ENCODE measurements at regions of chr19 and their contacts with region 1.

Region 1: GRCh38 chr19:23758187-23759074 is at the start of gene ZNF681:
- DNase-seq: peak; percentile 66
- ATAC-seq: peak; percentile 86
- H3K4me3 Mint-ChIP-seq: peak within 1 kb of the TSS; percentile 98
- H3K27ac Mint-ChIP-seq: peak within 1 kb of the TSS; percentile 93
- H3K4me1 Mint-ChIP-seq: peaks cover 19% of the 10 kb centered on the region
- H3K27me3 Mint-ChIP-seq: no peaks in the 10 kb centered on the region
- CTCF ChIP-seq: no peak
- total RNA-seq, gene ZNF681: 5.5 and 8.3 TPM in 2 replicates

Region 2: GRCh38 chr19:23116802-23117571 is 641.4 kb before region 1 on chr19 and contains the start of gene ZNF730:
- CTCF ChIA-PET with region 1: no interaction called
- POLR2A ChIA-PET with region 1: no interaction called
- intact Hi-C with region 1: loop called (anchors 2 kb)
- DNase-seq: peak; percentile 55
- ATAC-seq: peak; percentile 99
- H3K4me3 Mint-ChIP-seq: peak within 1 kb of the TSS; percentile 91
- H3K27ac Mint-ChIP-seq: peak within 1 kb of the TSS; percentile 24
- H3K4me1 Mint-ChIP-seq: peaks cover 11% of the 10 kb centered on the region
- H3K27me3 Mint-ChIP-seq: no peaks in the 10 kb centered on the region
- CTCF ChIP-seq: no peak
- total RNA-seq, gene ZNF730: 1.3 and 1.5 TPM in 2 replicates

Region 3: DNA sequence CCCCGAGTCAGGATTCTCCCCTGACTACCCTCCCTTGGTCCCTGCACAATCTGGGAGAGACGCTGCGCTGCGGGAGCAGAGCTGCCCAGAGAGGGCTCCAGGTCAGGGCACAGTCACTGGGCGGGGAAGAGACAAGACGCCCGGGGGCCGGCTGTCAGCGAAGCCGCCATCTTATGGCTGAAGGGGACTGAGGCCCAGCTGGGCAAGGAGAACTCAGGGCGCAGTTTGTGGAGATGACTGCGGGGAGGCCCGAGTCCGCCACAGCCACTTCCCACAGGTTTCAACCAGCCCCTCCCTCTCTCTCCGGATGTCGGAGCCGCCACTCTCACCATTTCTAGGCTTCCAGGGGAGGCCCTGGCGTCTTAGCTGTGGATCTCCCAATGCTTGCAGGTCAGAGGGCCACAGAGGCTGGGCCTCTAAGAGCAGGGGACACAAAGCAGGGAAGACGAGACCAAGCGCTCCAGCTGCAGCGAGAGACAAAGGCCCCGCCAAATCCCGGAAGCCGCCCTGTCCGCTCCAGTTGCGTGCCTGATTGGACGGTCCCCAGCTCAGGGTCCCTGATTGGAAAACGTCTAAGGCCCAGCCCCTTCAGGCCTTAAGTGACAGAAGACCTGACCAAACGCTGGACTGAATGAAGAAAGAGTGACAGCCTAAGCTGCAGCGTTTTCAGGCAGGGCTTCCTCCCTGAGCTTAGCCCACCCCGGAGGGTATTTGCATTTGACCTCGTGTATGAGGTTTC is 508.4 kb before region 1 on chr19 and contains the start of gene ZNF724:
- CTCF ChIA-PET with region 1: no interaction called
- POLR2A ChIA-PET with region 1: no interaction called
- intact Hi-C with region 1: loop called (anchors 2 kb)
- DNase-seq: peak; percentile 77
- ATAC-seq: peak; percentile 100
- H3K4me3 Mint-ChIP-seq: peak within 1 kb of the TSS; percentile 98
- H3K27ac Mint-ChIP-seq: peak within 1 kb of the TSS; percentile 88
- H3K4me1 Mint-ChIP-seq: peaks cover 10% of the 10 kb centered on the region
- H3K27me3 Mint-ChIP-seq: no peaks in the 10 kb centered on the region
- CTCF ChIP-seq: no peak
- total RNA-seq, gene ZNF724: 4.5 and 8.0 TPM in 2 replicates

Region 4: GRCh38 chr19:23832717-23833327 is 74.4 kb after region 1 on chr19:
- CTCF ChIA-PET with region 1: no interaction called
- POLR2A ChIA-PET with region 1: no interaction called
- intact Hi-C with region 1: no loop called
- DNase-seq: no peak
- ATAC-seq: no peak
- H3K4me3 Mint-ChIP-seq: no peak overlapping the region
- H3K27ac Mint-ChIP-seq: no peak overlapping the region
- H3K4me1 Mint-ChIP-seq: no peaks in the 10 kb centered on the region
- H3K27me3 Mint-ChIP-seq: no peaks in the 10 kb centered on the region
- CTCF ChIP-seq: no peak

Region 5: GRCh38 chr19:23914402-23915301 is 156.2 kb after region 1 on chr19 and contains the start of gene ZNF726:
- CTCF ChIA-PET with region 1: no interaction called
- POLR2A ChIA-PET with region 1: no interaction called
- intact Hi-C with region 1: loop called (anchors 1 kb)
- DNase-seq: peak; percentile 67
- ATAC-seq: peak; percentile 97
- H3K4me3 Mint-ChIP-seq: peak within 1 kb of the TSS; percentile 96
- H3K27ac Mint-ChIP-seq: peak within 1 kb of the TSS; percentile 83
- H3K4me1 Mint-ChIP-seq: peaks cover 10% of the 10 kb centered on the region
- H3K27me3 Mint-ChIP-seq: no peaks in the 10 kb centered on the region
- CTCF ChIP-seq: no peak
- total RNA-seq, gene ZNF726: 8.2 and 9.4 TPM in 2 replicates

Region 6: DNA sequence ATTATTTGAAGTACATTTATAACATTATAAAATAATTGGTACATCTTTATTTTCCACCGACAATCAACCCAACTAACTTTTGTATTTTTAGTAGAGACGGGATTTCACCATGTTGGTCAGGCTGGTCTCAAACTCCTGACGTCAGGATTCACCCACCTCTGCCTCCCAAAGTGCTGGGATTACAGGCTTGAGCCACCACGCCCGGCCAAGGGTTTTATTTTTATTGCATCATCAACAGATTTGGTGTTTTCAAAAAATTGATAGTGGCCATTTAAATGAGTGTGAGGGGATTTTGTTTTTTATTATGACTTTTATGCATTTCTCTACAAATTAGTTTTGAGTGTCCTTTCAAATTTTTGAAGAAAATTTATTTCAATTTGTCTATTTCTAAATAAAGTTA is 166.9 kb after region 1 on chr19:
- CTCF ChIA-PET with region 1: no interaction called
- POLR2A ChIA-PET with region 1: no interaction called
- intact Hi-C with region 1: no loop called
- DNase-seq: no peak
- ATAC-seq: no peak
- H3K4me3 Mint-ChIP-seq: no peak overlapping the region
- H3K27ac Mint-ChIP-seq: no peak overlapping the region
- H3K4me1 Mint-ChIP-seq: no peaks in the 10 kb centered on the region
- H3K27me3 Mint-ChIP-seq: no peaks in the 10 kb centered on the region
- CTCF ChIP-seq: no peak

Region 7: DNA sequence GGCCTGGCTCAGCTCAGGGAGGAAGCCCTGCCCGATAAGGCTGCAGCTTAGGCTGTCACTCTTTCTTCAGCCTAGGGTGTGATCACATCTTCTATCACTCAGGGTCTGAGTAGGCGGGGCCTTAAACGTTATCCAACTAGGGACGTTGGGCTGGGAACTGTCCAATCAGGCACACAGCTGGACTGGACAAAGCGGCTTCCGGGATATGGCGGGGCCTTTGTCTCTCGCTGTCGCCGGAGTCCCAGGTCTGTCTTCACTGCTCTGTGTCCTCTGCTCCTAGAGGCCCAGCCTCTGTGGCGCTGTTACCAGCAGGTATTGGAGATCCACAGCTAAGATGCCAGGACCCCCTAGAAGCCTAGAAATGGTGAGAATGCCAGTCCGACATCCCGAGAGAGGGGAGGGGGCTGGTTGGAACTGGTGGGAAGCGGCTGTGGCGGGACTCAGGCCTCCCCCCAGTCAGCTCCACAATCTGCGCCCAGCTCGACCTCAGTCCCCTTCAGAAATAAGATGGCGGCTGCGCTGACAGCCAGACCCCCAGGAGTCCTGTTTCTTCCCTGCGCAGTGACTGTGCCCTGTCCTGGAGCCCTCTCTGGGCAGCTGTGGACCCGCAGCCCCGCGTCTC is 328.7 kb after region 1 on chr19 and contains the start of gene ZNF254:
- CTCF ChIA-PET with region 1: no interaction called
- POLR2A ChIA-PET with region 1: interaction called, 7 read pairs
- intact Hi-C with region 1: loop called (anchors 2 kb)
- DNase-seq: peak; percentile 67
- ATAC-seq: peak; percentile 99
- H3K4me3 Mint-ChIP-seq: peak within 1 kb of the TSS; percentile 98
- H3K27ac Mint-ChIP-seq: peak within 1 kb of the TSS; percentile 97
- H3K4me1 Mint-ChIP-seq: peaks cover 10% of the 10 kb centered on the region
- H3K27me3 Mint-ChIP-seq: no peaks in the 10 kb centered on the region
- CTCF ChIP-seq: no peak
- total RNA-seq, gene ZNF254: 21.5 and 28.8 TPM in 2 replicates

Measured in activated B cell treated with CpG ODN at 0.5 μM for 24 hours (primary cell).